ENCODE measurements at regions of chr3 and their contacts with region 1.

Region 1: GRCh38 chr3:150408221-150409102 is at the start of gene TSC22D2:
- DNase-seq: peak; percentile 93
- H3K4me3 Mint-ChIP-seq: peak within 1 kb of the TSS; percentile 83
- H3K27ac Mint-ChIP-seq: peak within 1 kb of the TSS; percentile 94
- H3K4me1 Mint-ChIP-seq: peaks cover 32% of the 10 kb centered on the region
- H3K27me3 Mint-ChIP-seq: peaks cover 8% of the 10 kb centered on the region
- total RNA-seq, gene TSC22D2: 14.8 to 19.6 TPM

Region 2: DNA sequence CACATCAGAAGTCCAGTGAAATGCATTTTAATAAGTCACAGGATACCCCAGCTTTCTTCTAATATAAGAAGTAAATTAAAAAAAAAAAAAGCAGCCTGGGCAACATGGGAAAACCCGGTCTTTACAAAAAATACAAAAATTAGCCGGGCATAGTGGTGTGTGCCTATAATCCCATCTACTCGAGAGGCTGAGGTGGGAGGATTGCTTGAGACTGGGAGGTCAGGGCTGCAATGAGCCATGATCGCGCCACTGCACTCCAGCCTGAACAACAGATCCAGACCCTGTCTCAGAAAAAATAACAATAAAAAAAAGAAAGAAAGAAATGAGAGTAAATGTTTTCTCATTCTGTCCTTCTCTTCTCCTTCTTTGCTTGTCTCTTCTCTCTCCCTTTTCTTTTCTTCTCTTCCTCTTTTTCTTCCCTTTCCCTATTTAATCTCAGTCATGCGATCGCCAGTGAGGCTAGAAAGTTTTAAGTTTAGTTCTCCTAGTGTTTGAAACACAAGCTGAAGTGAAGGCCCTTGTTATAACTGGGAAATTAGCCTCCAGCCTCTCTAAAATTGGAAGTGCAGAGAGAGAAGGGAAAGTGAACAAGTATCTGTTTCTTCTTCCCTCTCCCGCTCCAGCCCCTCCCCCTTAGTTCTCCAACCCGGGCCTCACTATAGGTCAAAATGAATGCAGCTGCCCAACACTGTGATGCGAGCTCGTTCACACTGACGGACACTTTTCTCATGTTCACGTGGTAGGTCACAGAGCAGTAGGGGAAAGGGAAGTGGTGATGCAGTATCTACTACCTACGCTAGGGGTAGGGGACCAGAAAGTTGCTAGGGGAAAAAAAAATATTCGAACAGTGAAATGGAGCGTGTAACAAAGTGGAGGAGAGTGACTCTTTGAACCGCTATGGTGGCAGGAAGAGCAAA is 23.9 kb before region 1 on chr3:
- CTCF ChIA-PET with region 1: interaction called, 13 read pairs
- POLR2A ChIA-PET with region 1: interaction called, 3 read pairs
- DNase-seq: peak; percentile 52
- H3K4me3 Mint-ChIP-seq: peak overlapping the region; percentile 30
- H3K27ac Mint-ChIP-seq: peak overlapping the region; percentile 75
- H3K4me1 Mint-ChIP-seq: peaks cover 29% of the 10 kb centered on the region
- H3K27me3 Mint-ChIP-seq: no peaks in the 10 kb centered on the region

Region 3: DNA sequence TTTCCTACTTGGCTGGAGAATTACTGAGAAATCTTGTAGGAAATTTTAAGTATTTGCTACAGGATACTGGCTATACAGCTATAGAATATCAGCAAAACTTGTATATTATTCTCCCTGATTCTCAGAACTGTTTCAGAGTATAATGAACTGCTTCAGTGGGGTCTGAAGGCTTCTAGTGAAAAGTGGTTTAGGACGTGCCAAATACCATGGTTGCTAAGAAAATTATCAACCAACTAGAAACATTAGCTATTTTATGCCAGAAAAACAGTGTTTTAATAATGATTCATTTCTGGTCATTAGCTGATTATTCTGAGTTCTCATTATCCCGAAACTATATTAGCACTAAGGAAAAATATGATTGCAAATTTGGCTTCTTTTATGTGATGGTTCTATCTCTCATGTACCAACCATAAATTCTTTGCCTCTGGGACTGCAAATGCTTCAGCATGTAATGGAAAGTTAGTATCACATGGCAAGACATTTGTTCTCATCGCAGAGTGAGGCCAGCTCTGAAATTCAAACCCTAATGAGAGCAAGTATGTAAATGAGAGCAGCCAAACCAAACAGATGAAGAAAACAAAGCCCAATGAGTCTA is 11.4 kb before region 1 on chr3:
- CTCF ChIA-PET with region 1: interaction called, 20 read pairs
- POLR2A ChIA-PET with region 1: no interaction called
- DNase-seq: no peak
- H3K4me3 Mint-ChIP-seq: no peak overlapping the region
- H3K27ac Mint-ChIP-seq: no peak overlapping the region
- H3K4me1 Mint-ChIP-seq: no peaks in the 10 kb centered on the region
- H3K27me3 Mint-ChIP-seq: peaks cover 12% of the 10 kb centered on the region